B cell (primary cell): ENCODE measurements at regions of chr16 and their contacts with region 1.

Region 1: GRCh38 chr16:67399181-67399733 is 6.0 kb upstream of the TPPP3 start:
- DNase-seq: peak; percentile 72
- ATAC-seq: peak; percentile 78
- H3K4me3 ChIP-seq: no peak overlapping the region
- H3K4me3 Mint-ChIP-seq: no peak overlapping the region
- H3K27ac ChIP-seq: no peak overlapping the region
- H3K27ac Mint-ChIP-seq: no peak overlapping the region
- H3K4me1 ChIP-seq: peaks cover 11 to 16% of the 10 kb centered on the region in 2 donors
- H3K4me1 Mint-ChIP-seq: peaks cover 4% of the 10 kb centered on the region
- H3K27me3 ChIP-seq: peaks cover 0 to 33% (median 11%) of the 10 kb centered on the region in 4 experiments
- H3K27me3 Mint-ChIP-seq: peaks cover 17% of the 10 kb centered on the region
- CTCF ChIP-seq: peak; percentile 84

Region 2: GRCh38 chr16:66977341-66978113 is 421.7 kb before region 1 on chr16:
- CTCF ChIA-PET with region 1: no interaction called
- POLR2A ChIA-PET with region 1: no interaction called
- intact Hi-C with region 1: loop called (anchors 1 kb)
- DNase-seq: peak; percentile 87
- ATAC-seq: peak; percentile 98
- H3K4me3 ChIP-seq: no peak overlapping the region
- H3K4me3 Mint-ChIP-seq: no peak overlapping the region
- H3K27ac ChIP-seq: no peak overlapping the region
- H3K27ac Mint-ChIP-seq: peak overlapping the region; percentile 15
- H3K4me1 ChIP-seq: peaks cover 0 to 3% of the 10 kb centered on the region in 2 donors
- H3K4me1 Mint-ChIP-seq: peaks cover 1% of the 10 kb centered on the region
- H3K27me3 ChIP-seq: peaks cover 0 to 13% (median 0%) of the 10 kb centered on the region in 4 experiments
- H3K27me3 Mint-ChIP-seq: peaks cover 16% of the 10 kb centered on the region
- CTCF ChIP-seq: peak; percentile 93

Region 3: DNA sequence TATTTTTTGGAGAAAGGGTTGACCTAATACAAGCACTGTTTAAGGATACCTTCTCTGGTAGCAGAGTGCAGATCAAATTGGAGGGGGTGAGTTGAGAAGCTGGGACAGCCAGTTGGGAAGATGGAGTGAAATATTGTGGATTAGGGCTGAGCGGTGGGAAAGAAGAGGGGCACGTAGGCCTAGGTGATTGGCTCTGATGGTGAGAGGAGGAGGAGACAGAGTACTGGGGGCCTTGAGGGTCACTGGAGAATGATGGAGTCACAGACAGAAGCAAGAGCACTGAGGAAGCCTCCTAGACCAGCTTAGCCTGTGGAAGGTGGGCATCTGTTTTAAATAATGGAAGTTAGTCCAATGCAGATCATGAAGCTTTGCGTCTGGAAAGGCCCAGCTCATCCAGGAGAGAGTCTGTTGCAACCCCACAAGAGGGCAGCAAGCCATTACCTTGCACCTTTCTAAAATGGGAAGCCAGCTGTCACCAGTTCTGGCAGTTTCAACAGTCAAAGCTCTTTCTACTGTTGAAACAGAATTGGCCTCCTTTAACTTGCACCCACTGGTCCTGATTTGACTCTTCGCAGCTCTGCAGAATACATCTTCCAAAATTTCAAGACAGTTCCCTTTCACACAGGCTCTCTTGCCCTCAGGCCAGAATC is 138.7 kb before region 1 on chr16:
- CTCF ChIA-PET with region 1: interaction called, 11 read pairs
- POLR2A ChIA-PET with region 1: no interaction called
- intact Hi-C with region 1: loop called (anchors 1 kb)
- DNase-seq: peak; percentile 49
- ATAC-seq: peak; percentile 47
- H3K4me3 ChIP-seq: no peak overlapping the region
- H3K4me3 Mint-ChIP-seq: no peak overlapping the region
- H3K27ac ChIP-seq: no peak overlapping the region
- H3K27ac Mint-ChIP-seq: no peak overlapping the region
- H3K4me1 ChIP-seq: no peaks in the 10 kb centered on the region
- H3K4me1 Mint-ChIP-seq: no peaks in the 10 kb centered on the region
- H3K27me3 ChIP-seq: peaks cover 0 to 2% (median 0%) of the 10 kb centered on the region in 4 experiments
- H3K27me3 Mint-ChIP-seq: peaks cover 12% of the 10 kb centered on the region
- CTCF ChIP-seq: no peak

Region 4: DNA sequence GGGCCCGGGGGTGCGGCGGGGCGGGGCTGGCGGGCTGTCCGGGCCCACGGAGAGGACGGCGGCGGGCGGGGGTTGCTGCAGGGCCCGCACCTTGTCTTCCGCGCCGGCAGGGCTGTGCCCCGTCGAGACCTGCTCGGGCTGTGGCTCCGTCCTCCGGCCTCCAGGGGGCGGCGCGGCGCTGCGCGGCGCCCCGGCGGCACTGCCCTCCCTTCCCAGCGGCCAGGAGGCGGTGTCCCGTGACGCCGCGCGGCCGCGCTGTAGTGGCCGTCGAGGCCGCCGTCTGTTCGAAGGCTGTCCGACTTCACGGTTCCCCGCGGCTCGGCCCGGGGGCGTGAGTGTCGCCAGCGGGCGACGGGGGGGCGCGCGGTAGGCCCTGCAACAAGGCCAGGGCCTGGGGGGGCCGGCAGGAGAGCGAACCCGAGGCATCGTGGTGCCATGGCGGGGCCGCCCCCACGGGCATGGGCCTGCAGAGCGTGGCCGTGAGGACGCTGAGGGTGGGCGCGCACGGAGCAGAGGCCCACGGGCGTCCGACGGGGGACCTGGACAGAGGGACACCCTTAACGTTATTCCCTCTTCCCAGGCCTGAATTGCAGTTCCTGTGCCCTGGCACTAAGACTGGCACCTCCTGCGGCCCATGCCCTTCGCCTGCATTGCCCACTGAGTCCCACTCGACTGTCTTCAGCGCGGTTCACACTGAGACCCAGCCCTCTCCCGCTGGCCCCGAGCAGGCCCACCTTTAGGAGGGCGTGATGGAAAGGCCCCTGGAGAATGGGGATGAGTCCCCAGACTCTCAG is 119.8 kb before region 1 on chr16 and contains the start of gene PLEKHG4:
- CTCF ChIA-PET with region 1: interaction called, 5 read pairs
- POLR2A ChIA-PET with region 1: no interaction called
- intact Hi-C with region 1: loop called (anchors 1 kb)
- DNase-seq: peak; percentile 84
- ATAC-seq: peak; percentile 96
- H3K4me3 ChIP-seq: peak within 1 kb of the TSS in 4 of 5 experiments; percentile 51 to 72 (median 58)
- H3K4me3 Mint-ChIP-seq: peak within 1 kb of the TSS; percentile 85
- H3K27ac ChIP-seq: peak within 1 kb of the TSS in 1 of 2 donors; percentile 28
- H3K27ac Mint-ChIP-seq: peak within 1 kb of the TSS; percentile 56
- H3K4me1 ChIP-seq: peaks cover 7 to 11% of the 10 kb centered on the region in 2 donors
- H3K4me1 Mint-ChIP-seq: peaks cover 6% of the 10 kb centered on the region
- H3K27me3 ChIP-seq: no peaks in the 10 kb centered on the region
- H3K27me3 Mint-ChIP-seq: no peaks in the 10 kb centered on the region
- CTCF ChIP-seq: peak; percentile 81
- total RNA-seq, gene PLEKHG4: 6.0 and 6.7 TPM in 2 replicates

Region 5: GRCh38 chr16:67349172-67349571 is 50.1 kb before region 1 on chr16:
- CTCF ChIA-PET with region 1: interaction called, 10 read pairs
- POLR2A ChIA-PET with region 1: no interaction called
- intact Hi-C with region 1: loop called (anchors 10 kb)
- DNase-seq: peak; percentile 62
- ATAC-seq: peak; percentile 62
- H3K4me3 ChIP-seq: no peak overlapping the region
- H3K4me3 Mint-ChIP-seq: no peak overlapping the region
- H3K27ac ChIP-seq: no peak overlapping the region
- H3K27ac Mint-ChIP-seq: no peak overlapping the region
- H3K4me1 ChIP-seq: no peaks in the 10 kb centered on the region
- H3K4me1 Mint-ChIP-seq: no peaks in the 10 kb centered on the region
- H3K27me3 ChIP-seq: no peaks in the 10 kb centered on the region
- H3K27me3 Mint-ChIP-seq: peaks cover 3% of the 10 kb centered on the region
- CTCF ChIP-seq: peak; percentile 74